ENCODE measurements at regions of chr14 and their contacts with region 1.

Region 1: DNA sequence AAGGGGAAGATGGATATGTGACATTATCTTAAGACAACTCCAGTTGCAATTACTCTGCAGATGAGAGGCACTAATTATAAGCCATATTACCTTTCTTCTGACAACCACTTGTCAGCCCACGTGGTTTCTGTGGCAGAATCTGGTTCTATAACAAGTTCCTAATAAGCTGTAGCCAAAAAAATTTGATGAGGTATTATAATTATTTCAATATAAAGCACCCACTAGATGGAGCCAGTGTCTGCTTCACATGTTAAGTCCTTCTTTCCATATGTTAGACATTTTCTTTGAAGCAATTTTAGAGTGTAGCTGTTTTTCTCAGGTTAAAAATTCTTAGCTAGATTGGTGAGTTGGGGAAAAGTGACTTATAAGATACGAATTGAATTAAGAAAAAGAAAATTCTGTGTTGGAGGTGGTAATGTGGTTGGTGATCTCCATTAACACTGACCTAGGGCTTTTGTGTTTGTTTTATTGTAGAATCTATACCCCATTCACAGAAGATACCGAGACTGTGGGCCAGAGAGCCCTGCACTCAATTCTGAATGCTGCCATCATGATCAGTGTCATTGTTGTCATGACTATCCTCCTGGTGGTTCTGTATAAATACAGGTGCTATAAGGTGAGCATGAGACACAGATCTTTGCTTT is 36.9 kb downstream of the PSEN1 start:
- DNase-seq: peak; percentile 65
- ATAC-seq: peak; percentile 62
- H3K4me3 ChIP-seq: no peak overlapping the region
- H3K27ac ChIP-seq: no peak overlapping the region
- H3K4me1 ChIP-seq: 0 out of 2 replicates have a peak, but pooled peaks cover 2% of the 10 kb centered on the region
- H3K27me3 ChIP-seq: no peaks in the 10 kb centered on the region
- CTCF ChIP-seq: peak; percentile 69
- POLR2A ChIP-seq: no peak
- RAD21 ChIP-seq: peak; percentile 75

Region 2: DNA sequence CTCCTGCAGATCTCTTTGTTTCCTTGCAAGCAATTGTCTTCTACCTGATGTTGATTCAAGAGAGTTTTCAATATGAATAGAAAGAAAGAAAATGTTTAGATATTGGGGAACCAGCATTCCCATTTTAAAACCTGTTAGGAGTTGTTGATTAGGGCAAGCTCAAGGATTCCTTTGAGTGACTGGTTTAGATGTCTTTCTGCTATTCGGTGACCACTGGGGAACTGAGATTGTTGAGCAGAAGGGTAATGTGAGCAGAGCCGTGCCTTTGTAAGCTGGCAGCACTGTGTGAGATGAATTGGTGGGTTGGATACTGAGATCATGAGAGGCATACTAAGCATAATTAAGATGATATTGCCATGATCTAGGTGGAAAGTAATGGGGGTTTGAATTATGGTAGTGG is 25.0 kb after region 1 on chr14:
- CTCF ChIA-PET with region 1: no interaction called
- POLR2A ChIA-PET with region 1: no interaction called
- dilution Hi-C with region 1: no loop called
- in situ Hi-C with region 1: no loop called
- intact Hi-C with region 1: no loop called
- DNase-seq: no peak
- ATAC-seq: no peak
- H3K4me3 ChIP-seq: no peak overlapping the region
- H3K27ac ChIP-seq: no peak overlapping the region
- H3K4me1 ChIP-seq: no peaks in the 10 kb centered on the region
- H3K27me3 ChIP-seq: no peaks in the 10 kb centered on the region
- CTCF ChIP-seq: no peak
- POLR2A ChIP-seq: no peak
- RAD21 ChIP-seq: no peak

Region 3: GRCh38 chr14:73209953-73210352 is 36.7 kb after region 1 on chr14:
- CTCF ChIA-PET with region 1: no interaction called
- POLR2A ChIA-PET with region 1: no interaction called
- dilution Hi-C with region 1: no loop called
- in situ Hi-C with region 1: no loop called
- intact Hi-C with region 1: no loop called
- DNase-seq: peak; percentile 67
- ATAC-seq: peak; percentile 48
- H3K4me3 ChIP-seq: no peak overlapping the region
- H3K27ac ChIP-seq: no peak overlapping the region
- H3K4me1 ChIP-seq: peaks cover 4% of the 10 kb centered on the region
- H3K27me3 ChIP-seq: no peaks in the 10 kb centered on the region
- CTCF ChIP-seq: no peak
- POLR2A ChIP-seq: no peak
- RAD21 ChIP-seq: no peak

Region 4: DNA sequence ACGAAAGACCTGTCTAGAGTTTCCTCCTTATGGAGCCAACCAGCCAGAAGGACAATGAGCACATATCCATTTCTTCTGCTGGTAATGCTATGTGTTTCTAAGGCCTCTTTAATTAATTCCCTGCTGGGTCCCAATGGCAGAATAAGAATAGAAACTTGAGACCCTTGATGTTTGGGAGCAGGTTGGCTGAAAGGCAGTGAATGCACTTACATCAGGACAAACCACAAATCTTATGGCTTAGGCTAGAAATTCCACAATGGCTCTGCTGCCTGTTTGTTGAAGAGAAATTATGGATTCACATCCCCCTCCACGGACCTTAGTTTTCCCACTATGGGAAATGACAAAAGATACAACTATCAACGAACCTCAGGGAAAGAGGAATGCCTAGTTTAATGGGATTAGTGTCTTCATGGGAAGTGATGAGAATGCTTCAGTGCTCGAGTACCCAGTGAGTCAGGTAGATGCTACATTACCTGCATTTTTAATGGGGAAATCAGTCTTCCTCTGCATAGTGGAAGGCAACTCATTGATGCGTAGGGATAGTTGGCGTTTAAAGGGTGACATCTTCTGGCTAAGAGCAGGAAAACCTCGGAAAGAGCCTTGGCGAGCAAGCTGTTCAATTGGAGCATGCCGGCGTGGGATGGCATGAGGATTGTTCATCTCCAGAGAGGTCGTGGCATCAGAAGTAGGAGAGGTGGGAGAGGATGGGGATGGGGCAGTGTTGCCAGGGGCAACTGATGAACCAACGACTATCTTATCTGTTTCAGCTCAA is 110.6 kb after region 1 on chr14:
- CTCF ChIA-PET with region 1: interaction called, 3 read pairs
- POLR2A ChIA-PET with region 1: no interaction called
- dilution Hi-C with region 1: no loop called
- in situ Hi-C with region 1: no loop called
- intact Hi-C with region 1: loop called (anchors 5 kb)
- DNase-seq: peak; percentile 42
- ATAC-seq: peak; percentile 29; the same call in 1 of the 2 replicates
- H3K4me3 ChIP-seq: no peak overlapping the region
- H3K27ac ChIP-seq: no peak overlapping the region
- H3K4me1 ChIP-seq: peaks cover 3% of the 10 kb centered on the region
- H3K27me3 ChIP-seq: no peaks in the 10 kb centered on the region
- CTCF ChIP-seq: peak; percentile 30
- POLR2A ChIP-seq: no peak
- RAD21 ChIP-seq: peak; percentile 37; the same call in 1 of the 2 replicates

Region 5: DNA sequence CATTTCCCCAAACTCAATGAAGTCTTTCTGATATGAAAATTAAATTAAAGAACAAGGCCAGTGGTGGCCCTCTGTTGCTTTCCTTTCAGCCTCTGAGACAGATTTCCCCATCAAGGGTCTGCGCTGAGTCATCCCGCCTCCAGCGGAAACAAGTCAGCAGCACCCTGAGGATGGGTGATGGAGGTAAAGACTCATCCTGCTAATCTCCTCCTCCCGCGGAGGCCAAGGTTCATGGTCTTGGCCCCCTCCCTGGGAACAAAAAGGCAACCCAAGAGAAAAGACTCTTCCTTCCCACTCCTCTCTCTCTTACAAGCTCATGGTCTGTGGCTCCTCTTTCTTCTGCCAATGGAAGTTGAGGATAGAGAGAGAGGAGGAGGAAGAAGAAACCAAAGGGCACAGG is 294.2 kb after region 1 on chr14:
- CTCF ChIA-PET with region 1: interaction called, 3 read pairs
- POLR2A ChIA-PET with region 1: no interaction called
- dilution Hi-C with region 1: no loop called
- in situ Hi-C with region 1: loop called (anchors 5 kb)
- intact Hi-C with region 1: loop called (anchors 1 kb)
- DNase-seq: peak; percentile 59
- ATAC-seq: no peak; the same call in 1 of the 2 replicates
- H3K4me3 ChIP-seq: no peak overlapping the region
- H3K27ac ChIP-seq: peak overlapping the region; percentile 67
- H3K4me1 ChIP-seq: peaks cover 25% of the 10 kb centered on the region
- H3K27me3 ChIP-seq: no peaks in the 10 kb centered on the region
- CTCF ChIP-seq: no peak
- POLR2A ChIP-seq: no peak
- RAD21 ChIP-seq: no peak

Region 6: DNA sequence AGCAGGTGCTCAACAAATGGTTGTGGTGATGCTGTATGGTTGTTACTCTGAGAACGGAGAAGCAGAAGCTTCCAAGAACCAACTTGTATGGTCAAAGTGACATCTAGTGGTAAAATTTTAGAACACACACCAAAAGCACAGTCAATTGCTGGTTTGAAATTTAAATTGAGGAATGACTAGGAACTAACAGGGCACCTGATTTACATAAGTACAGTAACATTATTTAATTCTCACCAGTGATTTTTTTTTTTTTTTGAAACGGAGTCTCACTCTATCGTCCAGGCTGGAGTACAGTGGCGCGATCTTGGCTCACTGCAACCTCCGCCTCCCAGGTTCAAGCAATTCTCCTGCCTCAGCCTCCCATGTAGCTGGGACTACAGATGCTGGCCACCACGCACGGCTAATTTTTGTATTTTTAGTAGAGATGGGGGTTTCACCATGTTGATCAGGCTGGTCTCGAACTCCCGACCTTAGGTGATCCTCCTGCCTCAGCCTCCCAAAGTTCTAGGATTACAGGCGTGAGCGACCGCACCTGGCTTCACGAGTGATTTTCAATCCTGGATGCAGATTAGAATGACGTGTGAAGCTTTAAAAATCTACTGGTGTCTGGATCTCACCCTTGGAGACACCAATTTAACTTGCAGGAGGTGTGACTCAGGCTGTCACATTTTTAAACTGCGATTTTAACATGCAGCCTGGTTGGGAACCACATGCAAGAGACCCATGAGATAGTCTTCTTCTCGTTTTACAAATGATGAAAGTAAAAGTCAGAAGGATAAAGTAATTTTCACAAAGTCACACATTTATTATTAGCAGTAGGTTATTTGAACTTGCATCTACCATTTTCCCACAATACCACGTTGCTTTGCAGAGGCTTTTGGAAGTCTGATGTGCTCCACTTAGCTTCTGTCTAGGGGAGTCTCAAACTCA is 299.2 kb after region 1 on chr14:
- CTCF ChIA-PET with region 1: interaction called, 3 read pairs
- POLR2A ChIA-PET with region 1: no interaction called
- dilution Hi-C with region 1: no loop called
- in situ Hi-C with region 1: loop called (anchors 5 kb)
- intact Hi-C with region 1: loop called (anchors 1 kb)
- DNase-seq: peak; percentile 82
- ATAC-seq: peak; percentile 40
- H3K4me3 ChIP-seq: no peak overlapping the region
- H3K27ac ChIP-seq: no peak overlapping the region
- H3K4me1 ChIP-seq: peaks cover 7% of the 10 kb centered on the region
- H3K27me3 ChIP-seq: no peaks in the 10 kb centered on the region
- CTCF ChIP-seq: peak; percentile 85
- POLR2A ChIP-seq: no peak
- RAD21 ChIP-seq: peak; percentile 95

Measured in IMR-90 (cell line).